AG04449 (cell line): ENCODE measurements at regions of chr16 and their contacts with region 1.

Region 1: DNA sequence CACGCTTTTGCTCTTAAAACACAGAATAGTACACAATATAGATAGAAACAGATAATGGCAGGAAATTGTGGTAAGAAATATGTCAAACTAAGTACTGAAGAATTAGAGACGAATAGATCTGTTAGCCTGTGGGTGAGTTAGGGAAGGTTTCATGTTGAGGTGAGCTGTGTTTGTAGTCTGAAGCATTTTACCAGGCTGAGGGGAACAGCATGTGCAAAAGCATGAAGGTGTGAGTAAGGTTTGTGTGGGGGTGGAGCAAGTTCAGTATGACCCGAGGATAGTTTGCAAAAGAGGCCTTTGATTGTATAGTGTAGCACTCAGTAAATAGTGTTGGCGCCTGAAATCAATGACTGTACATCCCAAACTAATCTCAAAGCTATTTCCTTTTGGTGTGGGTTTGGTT is 13.8 kb downstream of the IGSF6 start:
- DNase-seq: no peak
- H3K4me3 ChIP-seq: no peak overlapping the region
- CTCF ChIP-seq: no peak

Region 2: GRCh38 chr16:21584817-21585216 is 53.8 kb before region 1 on chr16:
- CTCF ChIA-PET with region 1: interaction called, 102 read pairs
- POLR2A ChIA-PET with region 1: interaction called, 3 read pairs
- DNase-seq: no peak
- H3K4me3 ChIP-seq: no peak overlapping the region
- CTCF ChIP-seq: no peak

Region 3: GRCh38 chr16:21590287-21590686 is 48.3 kb before region 1 on chr16:
- CTCF ChIA-PET with region 1: interaction called, 102 read pairs
- POLR2A ChIA-PET with region 1: no interaction called
- DNase-seq: no peak
- H3K4me3 ChIP-seq: no peak overlapping the region
- CTCF ChIP-seq: no peak

Region 4: GRCh38 chr16:21603928-21604327 is 34.6 kb before region 1 on chr16:
- CTCF ChIA-PET with region 1: interaction called, 30 read pairs
- POLR2A ChIA-PET with region 1: no interaction called
- DNase-seq: no peak
- H3K4me3 ChIP-seq: no peak overlapping the region
- CTCF ChIP-seq: no peak

Region 5: GRCh38 chr16:21626659-21627277 is 11.8 kb before region 1 on chr16:
- CTCF ChIA-PET with region 1: interaction called, 11 read pairs
- POLR2A ChIA-PET with region 1: interaction called, 3 read pairs
- DNase-seq: peak; percentile 79
- H3K4me3 ChIP-seq: peak overlapping the region; percentile 21; the same call in 1 of the 2 replicates
- CTCF ChIP-seq: no peak

Region 6: DNA sequence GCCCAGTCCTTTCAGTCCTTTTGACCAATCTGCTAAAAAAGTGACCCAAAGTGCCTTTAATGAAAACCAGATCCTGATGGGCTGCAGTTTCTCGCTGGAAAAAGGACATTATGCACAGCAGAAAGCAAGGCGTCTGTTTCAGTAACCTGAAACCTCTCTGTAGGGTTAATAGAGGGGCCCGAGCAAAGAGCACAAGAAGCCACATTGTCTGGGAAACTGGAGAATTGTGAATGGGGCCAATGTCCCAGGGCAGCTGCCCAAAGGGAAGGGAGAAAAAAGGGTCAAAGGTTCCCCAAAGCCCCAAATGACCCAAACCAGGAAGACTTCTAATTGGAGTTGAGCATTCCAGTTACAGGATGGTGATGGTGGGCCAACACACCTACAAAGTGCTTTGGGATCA is 28.2 kb after region 1 on chr16:
- CTCF ChIA-PET with region 1: no interaction called
- POLR2A ChIA-PET with region 1: no interaction called
- DNase-seq: no peak
- H3K4me3 ChIP-seq: no peak overlapping the region
- CTCF ChIP-seq: no peak